GM12878 (cell line): ENCODE measurements at regions of chr6 and their contacts with region 1.

Region 1: DNA sequence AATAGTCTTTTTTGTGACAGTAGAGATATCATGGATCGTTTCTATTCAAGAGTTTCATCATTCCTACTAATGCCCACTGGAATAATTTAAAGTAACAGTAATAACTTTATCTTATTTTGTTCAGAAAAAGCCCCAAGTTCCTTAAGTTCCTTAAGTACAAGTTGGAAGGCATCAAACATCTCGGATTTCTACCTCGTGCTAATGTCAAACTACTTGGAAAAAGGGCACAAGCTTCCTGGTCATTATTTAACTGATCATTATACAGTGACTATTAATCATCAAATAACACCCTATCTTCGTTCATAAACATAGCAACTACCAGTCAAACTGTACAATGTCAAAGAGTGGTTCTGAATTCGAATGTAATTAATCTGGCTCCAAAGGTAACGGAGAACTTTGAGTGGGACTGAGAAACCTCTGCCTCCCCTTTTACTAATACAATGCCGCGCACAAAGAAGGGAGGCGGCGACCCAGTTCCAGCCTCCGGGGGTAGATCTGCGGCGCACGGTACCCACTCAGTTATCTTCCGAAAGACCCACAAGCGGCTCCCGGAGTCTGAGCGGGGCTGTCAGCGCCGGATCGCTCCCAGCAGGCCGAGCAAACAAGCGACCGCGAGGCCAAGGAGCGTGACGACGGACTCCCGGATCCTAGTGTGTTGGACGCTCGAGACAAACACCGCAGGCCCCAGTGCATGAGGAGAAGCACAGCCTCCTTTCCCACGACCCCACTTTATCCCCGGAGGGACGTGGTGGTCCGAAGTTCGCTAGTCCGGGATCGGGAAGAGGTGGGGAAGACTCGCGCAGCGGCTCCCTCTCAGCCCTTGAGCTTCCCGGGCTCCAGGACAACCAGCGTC is 716 bp downstream of the SHPRH start:
- DNase-seq: peak; percentile 8
- ATAC-seq: peak; percentile 60
- H3K4me3 ChIP-seq: peak overlapping the region; percentile 95
- H3K27ac ChIP-seq: peak overlapping the region; percentile 71
- H3K4me1 ChIP-seq: no peaks in the 10 kb centered on the region
- H3K27me3 ChIP-seq: no peaks in the 10 kb centered on the region
- CTCF ChIP-seq: no peak
- EP300 ChIP-seq: no peak
- POLR2A ChIP-seq: no peak
- RAD21 ChIP-seq: no peak

Region 2: DNA sequence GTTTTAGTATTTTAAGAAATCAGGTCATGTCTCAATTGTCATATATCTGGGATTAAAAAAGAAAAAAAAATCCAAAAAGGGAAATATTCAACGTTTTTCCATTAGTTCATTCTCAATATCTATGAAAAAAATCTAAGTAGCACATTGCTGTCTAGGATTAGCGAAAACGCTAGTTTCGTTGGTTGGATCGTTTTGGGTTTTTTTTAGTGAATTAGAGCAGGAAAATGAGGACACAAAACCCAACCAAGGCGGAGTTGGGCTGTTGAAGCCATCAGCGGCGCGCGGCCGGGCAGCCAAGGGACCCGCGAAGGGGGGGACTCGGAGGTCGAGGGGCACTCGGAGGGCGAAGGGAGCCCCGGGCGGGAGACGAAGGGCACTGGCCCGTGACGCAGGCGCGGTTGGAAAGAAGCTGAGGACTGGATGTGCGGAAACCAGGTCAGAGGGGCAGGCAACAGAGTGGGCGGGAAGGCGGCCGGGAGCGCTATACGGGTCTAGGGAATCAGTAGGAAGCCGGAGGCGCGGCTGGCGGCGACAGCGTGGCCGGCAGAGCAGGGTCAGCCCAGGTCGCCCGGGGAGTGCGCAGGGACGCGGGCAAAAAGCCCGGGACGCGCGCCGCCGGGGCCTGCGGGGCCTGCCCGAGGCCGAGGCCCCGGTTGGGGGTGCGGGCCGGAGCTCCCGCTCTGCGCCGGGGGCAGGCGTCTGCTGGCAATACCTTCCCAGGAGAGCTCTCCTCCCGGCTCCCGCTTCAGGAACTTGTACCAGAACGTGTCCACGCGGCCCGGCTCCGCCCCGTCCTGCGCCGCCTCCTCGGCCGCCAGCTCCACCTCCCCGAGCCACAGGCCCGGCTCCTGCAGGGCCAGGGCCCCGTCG is 228.7 kb before region 1 on chr6:
- CTCF ChIA-PET with region 1: interaction called, 6 read pairs
- POLR2A ChIA-PET with region 1: interaction called, 5 read pairs
- RAD21 ChIA-PET with region 1: interaction called, 3 read pairs
- SMC1A ChIA-PET with region 1: interaction called, 3 read pairs
- in situ Hi-C with region 1: no loop called
- intact Hi-C with region 1: loop called (anchors 5 kb)
- DNase-seq: no peak
- ATAC-seq: peak; percentile 79
- H3K4me3 ChIP-seq: peak overlapping the region; percentile 95
- H3K27ac ChIP-seq: peak overlapping the region; percentile 83
- H3K4me1 ChIP-seq: no peaks in the 10 kb centered on the region; the same call in 1 of the 2 replicates
- H3K27me3 ChIP-seq: no peaks in the 10 kb centered on the region
- CTCF ChIP-seq: no peak
- EP300 ChIP-seq: 0 out of 4 replicates have a peak, but pooled peaks of 1 of the 2 experiments have one; percentile 20
- POLR2A ChIP-seq: peak; percentile 77
- RAD21 ChIP-seq: no peak

Region 3: DNA sequence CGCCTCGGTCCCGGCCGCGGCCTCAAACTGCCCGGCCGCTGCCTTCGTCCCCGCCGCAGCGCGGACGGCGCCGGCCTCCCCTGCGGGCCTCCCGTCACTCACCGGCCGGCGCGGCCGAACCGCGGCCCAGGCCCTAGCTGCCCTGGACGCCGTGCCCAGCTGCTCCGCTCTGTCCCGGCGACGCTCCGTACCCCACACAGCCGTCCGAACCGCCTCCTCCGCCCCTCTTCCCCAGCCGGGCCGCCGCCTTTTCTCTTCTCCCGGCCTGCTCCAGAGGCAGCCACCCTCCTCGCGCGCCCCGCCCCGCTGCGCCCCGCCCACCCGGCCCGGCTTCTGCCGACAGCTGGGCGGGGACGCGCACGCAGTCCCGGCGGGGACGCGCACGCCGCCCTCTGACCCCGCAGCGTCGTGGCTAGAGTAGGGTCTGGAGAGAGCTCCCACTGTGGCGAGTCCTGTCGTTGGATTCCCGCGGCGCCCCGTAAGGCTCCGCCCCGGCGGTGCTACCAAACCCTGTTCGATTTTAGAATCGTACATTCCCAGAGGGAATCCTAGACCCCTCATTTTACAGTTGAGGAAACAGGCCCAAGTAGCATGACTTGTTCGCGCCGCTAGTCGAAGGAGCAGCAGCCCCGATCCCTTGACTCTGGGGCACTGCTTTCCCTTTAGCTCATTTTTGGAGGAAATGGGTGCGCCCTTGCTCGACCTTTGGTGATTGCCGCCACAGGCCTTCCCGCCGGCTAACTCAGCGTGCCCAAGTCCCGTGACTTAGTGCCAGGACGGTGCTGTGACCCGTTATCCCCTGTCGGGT is 148.7 kb before region 1 on chr6 and contains the start of gene FBXO30:
- CTCF ChIA-PET with region 1: interaction called, 4 read pairs
- POLR2A ChIA-PET with region 1: interaction called, 3 read pairs
- RAD21 ChIA-PET with region 1: interaction called, 3 read pairs
- SMC1A ChIA-PET with region 1: interaction called, 3 read pairs
- in situ Hi-C with region 1: no loop called
- intact Hi-C with region 1: loop called (anchors 1 kb)
- DNase-seq: peak; percentile 64
- ATAC-seq: peak; percentile 76
- H3K4me3 ChIP-seq: peak within 1 kb of the TSS; percentile 97
- H3K27ac ChIP-seq: peak within 1 kb of the TSS; percentile 95
- H3K4me1 ChIP-seq: peaks cover 5% of the 10 kb centered on the region
- H3K27me3 ChIP-seq: no peaks in the 10 kb centered on the region
- CTCF ChIP-seq: no peak
- EP300 ChIP-seq: no peak
- POLR2A ChIP-seq: peak; percentile 93
- RAD21 ChIP-seq: no peak
- polyA plus RNA-seq, gene FBXO30: 1.7 to 1.9 TPM

Region 4: GRCh38 chr6:145929037-145929633 is 34.3 kb before region 1 on chr6:
- CTCF ChIA-PET with region 1: interaction called, 17 read pairs
- POLR2A ChIA-PET with region 1: no interaction called
- RAD21 ChIA-PET with region 1: interaction called, 5 read pairs
- SMC1A ChIA-PET with region 1: no interaction called
- in situ Hi-C with region 1: no loop called
- intact Hi-C with region 1: no loop called
- DNase-seq: no peak
- ATAC-seq: no peak
- H3K4me3 ChIP-seq: no peak overlapping the region
- H3K27ac ChIP-seq: no peak overlapping the region
- H3K4me1 ChIP-seq: no peaks in the 10 kb centered on the region
- H3K27me3 ChIP-seq: no peaks in the 10 kb centered on the region
- CTCF ChIP-seq: peak; percentile 47 to 60 (median 52); a peak in 4 of 6 replicates
- EP300 ChIP-seq: no peak
- POLR2A ChIP-seq: no peak
- RAD21 ChIP-seq: peak; percentile 58

Region 5: GRCh38 chr6:145977881-145978280 is 14.4 kb after region 1 on chr6:
- CTCF ChIA-PET with region 1: no interaction called
- POLR2A ChIA-PET with region 1: no interaction called
- RAD21 ChIA-PET with region 1: no interaction called
- SMC1A ChIA-PET with region 1: interaction called, 15 read pairs
- in situ Hi-C with region 1: no loop called
- intact Hi-C with region 1: no loop called
- DNase-seq: no peak
- ATAC-seq: no peak
- H3K4me3 ChIP-seq: no peak overlapping the region
- H3K27ac ChIP-seq: no peak overlapping the region
- H3K4me1 ChIP-seq: no peaks in the 10 kb centered on the region
- H3K27me3 ChIP-seq: no peaks in the 10 kb centered on the region
- CTCF ChIP-seq: no peak
- EP300 ChIP-seq: no peak
- POLR2A ChIP-seq: no peak
- RAD21 ChIP-seq: no peak

Region 6: DNA sequence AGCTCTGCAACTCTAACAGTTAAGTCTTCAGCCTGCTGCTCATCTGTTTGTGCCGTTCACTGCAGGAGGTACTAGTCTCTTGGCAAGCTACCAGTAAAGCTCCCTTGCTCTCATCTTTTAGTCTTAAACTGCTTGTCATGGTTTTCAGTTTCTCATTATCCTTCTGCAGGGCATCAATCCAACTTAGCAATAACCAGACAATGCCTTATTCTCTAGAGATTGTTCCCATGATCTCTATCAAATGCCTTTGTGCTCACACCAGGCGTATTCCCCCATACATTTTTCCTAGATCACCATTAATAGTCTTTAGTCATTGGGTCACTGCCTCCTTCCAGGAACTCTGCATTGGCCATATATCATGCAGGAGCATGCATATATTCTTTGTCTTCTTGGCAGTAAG is 236.7 kb after region 1 on chr6:
- CTCF ChIA-PET with region 1: no interaction called
- POLR2A ChIA-PET with region 1: interaction called, 11 read pairs
- RAD21 ChIA-PET with region 1: no interaction called
- SMC1A ChIA-PET with region 1: no interaction called
- in situ Hi-C with region 1: no loop called
- intact Hi-C with region 1: no loop called
- DNase-seq: no peak
- ATAC-seq: no peak
- H3K4me3 ChIP-seq: no peak overlapping the region
- H3K27ac ChIP-seq: no peak overlapping the region
- H3K4me1 ChIP-seq: no peaks in the 10 kb centered on the region
- H3K27me3 ChIP-seq: no peaks in the 10 kb centered on the region
- CTCF ChIP-seq: no peak
- EP300 ChIP-seq: no peak
- POLR2A ChIP-seq: no peak
- RAD21 ChIP-seq: no peak